BJ (cell line): ENCODE measurements at regions of chr9 and their contacts with region 1.

Region 1: GRCh38 chr9:74773886-74774479 is 113.7 kb downstream of the TRPM6 start:
- DNase-seq: no peak
- H3K4me3 ChIP-seq: no peak overlapping the region
- H3K27me3 ChIP-seq: no peaks in the 10 kb centered on the region
- CTCF ChIP-seq: peak; percentile 88

Region 2: GRCh38 chr9:74361508-74361907 is 412.5 kb before region 1 on chr9:
- CTCF ChIA-PET with region 1: no interaction called
- POLR2A ChIA-PET with region 1: no interaction called
- DNase-seq: no peak
- H3K4me3 ChIP-seq: no peak overlapping the region
- H3K27me3 ChIP-seq: no peaks in the 10 kb centered on the region
- CTCF ChIP-seq: no peak

Region 3: DNA sequence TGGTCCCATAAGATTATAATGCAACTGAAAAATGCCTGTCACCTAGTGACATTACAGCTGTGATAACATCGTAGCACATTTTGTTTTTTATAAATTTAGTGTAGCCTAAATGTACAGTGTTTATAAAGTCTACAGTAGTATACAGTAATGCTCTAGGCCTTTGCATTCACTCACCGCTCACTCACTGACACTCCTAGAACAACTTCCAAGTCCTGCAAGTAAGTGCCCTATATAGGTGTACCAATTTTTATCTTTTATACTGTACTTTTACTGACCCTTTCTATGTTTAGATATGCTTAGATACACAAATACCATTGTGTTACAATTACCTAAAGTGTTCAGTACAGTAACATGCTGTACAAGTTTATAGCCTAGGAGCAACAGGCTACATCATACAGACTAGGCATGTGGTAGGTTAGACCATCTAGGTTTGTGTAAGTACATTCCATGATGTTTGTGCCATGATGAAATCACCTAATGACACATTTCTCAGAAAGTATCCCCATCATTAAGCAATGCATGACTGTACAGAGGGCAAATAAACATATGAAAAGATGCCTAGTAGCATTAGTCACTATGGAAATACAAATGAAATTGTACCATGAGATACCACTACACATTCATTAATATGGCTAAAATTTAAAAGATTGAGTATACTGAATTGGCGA is 13.8 kb before region 1 on chr9:
- CTCF ChIA-PET with region 1: interaction called, 22 read pairs
- POLR2A ChIA-PET with region 1: no interaction called
- DNase-seq: peak; percentile 62
- H3K4me3 ChIP-seq: no peak overlapping the region
- H3K27me3 ChIP-seq: no peaks in the 10 kb centered on the region
- CTCF ChIP-seq: no peak

Region 4: DNA sequence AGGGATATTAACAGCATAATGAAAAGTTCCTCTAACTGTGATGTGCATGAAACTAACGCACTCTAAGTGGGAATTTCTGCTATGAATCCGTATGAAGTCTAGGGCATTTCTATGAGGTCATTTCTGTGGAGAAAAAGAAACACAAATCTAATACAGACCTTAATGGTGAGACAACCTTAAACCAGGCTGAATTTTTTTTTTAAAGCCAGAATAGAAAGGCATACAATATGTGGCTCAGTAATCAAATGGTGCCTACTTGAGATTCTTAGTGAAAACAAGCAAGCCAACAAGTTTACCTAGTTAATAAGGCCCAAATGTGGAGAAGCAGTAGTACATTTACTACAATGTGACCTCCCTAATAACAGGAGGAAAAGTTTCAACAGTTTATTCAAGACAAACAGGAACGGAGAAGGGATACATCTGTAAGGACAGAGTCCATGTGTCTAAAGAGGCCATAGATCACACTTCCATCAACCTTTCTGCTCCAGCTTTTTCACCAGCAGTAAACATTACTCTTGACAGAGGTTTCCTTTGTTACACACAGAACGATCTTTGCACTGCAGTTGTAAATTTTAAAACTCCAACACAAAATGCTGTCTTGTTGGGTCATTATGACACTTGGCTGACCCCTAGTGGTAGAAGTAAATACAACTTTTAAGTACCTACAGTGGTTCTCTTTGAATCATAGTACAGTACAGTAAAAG is 227.9 kb after region 1 on chr9:
- CTCF ChIA-PET with region 1: interaction called, 196 read pairs
- POLR2A ChIA-PET with region 1: no interaction called
- DNase-seq: peak; percentile 31
- H3K4me3 ChIP-seq: no peak overlapping the region
- H3K27me3 ChIP-seq: no peaks in the 10 kb centered on the region
- CTCF ChIP-seq: peak; percentile 64

Region 5: DNA sequence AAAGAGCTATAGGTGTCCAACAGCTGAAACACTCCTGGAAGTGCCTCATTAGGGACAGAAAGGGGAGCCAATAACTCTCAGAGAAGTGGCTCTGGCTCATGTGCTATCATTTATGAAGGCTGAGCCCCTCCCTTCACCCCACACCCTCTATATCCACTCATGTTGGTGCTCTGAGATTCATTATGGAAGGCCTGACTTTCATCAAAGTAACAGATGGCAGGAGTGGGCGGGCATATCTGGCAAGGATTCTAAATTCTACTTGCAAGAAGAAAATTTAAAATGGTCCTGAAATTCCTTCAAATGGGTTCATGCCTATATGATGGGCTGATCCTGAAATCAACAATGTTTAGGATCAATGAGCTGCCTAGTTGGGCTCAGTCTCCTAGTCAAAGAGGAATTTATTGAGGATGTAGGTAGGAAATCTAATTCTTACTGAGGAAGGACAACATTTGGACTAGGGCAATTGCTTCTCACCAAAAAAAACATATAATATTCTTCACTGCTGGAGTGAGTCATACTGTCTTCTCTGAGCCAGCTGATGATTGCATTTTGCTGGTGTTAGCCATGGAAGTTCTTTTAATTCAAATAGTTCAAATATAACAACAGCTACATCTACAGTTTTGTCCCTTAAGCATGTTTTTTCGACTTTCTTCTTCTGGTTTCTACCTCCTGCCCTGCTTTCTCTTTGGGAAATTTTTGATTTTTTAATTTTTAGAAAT is 290.5 kb after region 1 on chr9:
- CTCF ChIA-PET with region 1: interaction called, 16 read pairs
- POLR2A ChIA-PET with region 1: no interaction called
- DNase-seq: no peak
- H3K4me3 ChIP-seq: no peak overlapping the region
- H3K27me3 ChIP-seq: no peaks in the 10 kb centered on the region
- CTCF ChIP-seq: no peak

Region 6: GRCh38 chr9:75086853-75087677 is 313.1 kb after region 1 on chr9:
- CTCF ChIA-PET with region 1: interaction called, 22 read pairs
- POLR2A ChIA-PET with region 1: no interaction called
- DNase-seq: no peak
- H3K4me3 ChIP-seq: peak overlapping the region; percentile 97
- H3K27me3 ChIP-seq: no peaks in the 10 kb centered on the region
- CTCF ChIP-seq: no peak